Heart right ventricle (tissue), 16 donors: ENCODE measurements at regions of chr16 and their contacts with region 1.

Region 1: DNA sequence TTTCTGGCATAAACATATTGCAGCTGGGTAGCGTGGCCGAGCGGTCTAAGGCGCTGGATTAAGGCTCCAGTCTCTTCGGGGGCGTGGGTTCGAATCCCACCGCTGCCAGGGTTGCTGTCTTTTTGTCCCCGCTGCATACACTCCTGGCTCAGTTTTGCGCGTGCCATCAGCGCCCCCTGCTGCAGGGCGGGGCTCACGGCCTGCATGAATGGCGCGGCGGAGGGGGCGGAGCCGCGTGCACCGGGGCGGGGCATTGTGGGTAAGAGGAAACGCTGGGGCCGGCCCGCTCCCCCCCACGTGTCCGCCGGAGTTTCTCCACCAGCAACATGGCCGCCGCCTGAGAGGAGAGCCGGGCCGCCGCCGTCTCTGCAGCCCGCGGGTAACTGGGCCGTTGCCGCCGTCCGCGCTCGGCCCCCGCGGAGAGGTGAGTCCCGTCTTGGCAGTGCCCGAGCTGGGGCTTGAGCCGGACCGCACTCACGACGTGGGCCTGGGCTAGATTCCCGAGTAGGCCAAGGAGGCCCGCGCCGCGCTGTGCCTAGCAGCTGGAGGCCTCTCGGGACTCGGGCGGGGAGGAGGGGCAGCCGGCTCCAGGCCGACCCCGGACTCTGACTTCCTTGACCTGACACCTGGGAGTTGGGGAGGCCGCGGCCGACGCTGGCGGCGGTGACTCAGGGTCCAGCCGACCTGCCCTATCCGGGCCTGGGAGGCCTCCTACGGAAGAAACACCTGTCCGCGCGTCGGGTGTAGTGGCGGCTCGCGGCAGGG is at the start of gene POLR3E:
- DNase-seq: peak; percentile 99 to 100
- ATAC-seq: peak; percentile 95 to 97 (median 97)
- H3K4me3 ChIP-seq: peak within 1 kb of the TSS; percentile 58 to 99 (median 87)
- H3K27ac ChIP-seq: peak within 1 kb of the TSS; percentile 61 to 96 (median 92)
- H3K4me1 ChIP-seq: peaks cover 0 to 35% (median 23%) of the 10 kb centered on the region in 9 donors
- H3K27me3 ChIP-seq: no peaks in the 10 kb centered on the region
- CTCF ChIP-seq: peak; percentile 90 to 98 (median 96)
- total RNA-seq, gene POLR3E: 27.8 to 40.7 (median 31.7) TPM

Region 2: DNA sequence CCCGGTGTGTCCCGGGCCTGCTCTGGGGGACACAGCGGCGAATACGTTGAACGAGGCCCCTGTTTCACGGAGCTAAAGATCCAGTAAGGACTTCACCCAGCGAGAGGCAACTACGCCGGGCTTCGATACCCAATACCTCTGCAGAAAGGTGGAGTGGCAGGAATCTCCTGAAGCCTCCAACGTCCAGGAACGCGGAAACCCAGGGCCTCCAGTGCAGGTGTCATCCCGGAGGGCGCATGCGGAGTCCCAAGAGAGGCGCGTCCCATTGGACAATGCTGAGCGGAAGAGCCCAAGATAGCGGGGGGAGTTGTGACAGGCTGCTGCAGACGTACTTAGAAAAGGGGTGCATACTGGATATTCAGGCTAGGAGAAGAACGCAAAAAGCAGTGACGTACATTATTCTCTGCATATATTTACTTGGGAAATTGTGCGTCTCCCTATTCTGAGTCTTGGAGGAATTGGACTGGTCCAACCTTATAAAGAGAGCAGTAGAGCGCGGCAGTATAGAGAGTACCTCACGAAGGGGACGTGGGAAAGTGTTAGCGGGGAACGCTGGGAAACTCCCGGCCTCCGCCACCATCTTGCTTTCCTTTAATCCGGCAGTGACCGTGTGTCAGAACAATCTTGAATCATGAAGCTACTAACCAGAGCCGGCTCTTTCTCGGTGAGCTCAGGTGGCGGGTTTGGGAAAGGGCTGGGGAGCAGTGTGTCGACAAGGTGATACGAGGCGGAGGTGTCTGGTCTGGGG is 344.3 kb before region 1 on chr16 and contains the start of gene UQCRC2:
- intact Hi-C with region 1: loop called in 1 of 10 experiments (anchors 2 kb)
- DNase-seq: peak; percentile 85 to 93
- ATAC-seq: peak; percentile 95 to 98 (median 97)
- H3K4me3 ChIP-seq: peak within 1 kb of the TSS; percentile 78 to 98 (median 88)
- H3K27ac ChIP-seq: peak within 1 kb of the TSS; percentile 86 to 99 (median 96)
- H3K4me1 ChIP-seq: peaks cover 3 to 70% (median 50%) of the 10 kb centered on the region in 9 donors
- H3K27me3 ChIP-seq: no peaks in the 10 kb centered on the region
- CTCF ChIP-seq: no peak
- total RNA-seq, gene UQCRC2: 648 to 1,183 (median 997) TPM

Region 3: DNA sequence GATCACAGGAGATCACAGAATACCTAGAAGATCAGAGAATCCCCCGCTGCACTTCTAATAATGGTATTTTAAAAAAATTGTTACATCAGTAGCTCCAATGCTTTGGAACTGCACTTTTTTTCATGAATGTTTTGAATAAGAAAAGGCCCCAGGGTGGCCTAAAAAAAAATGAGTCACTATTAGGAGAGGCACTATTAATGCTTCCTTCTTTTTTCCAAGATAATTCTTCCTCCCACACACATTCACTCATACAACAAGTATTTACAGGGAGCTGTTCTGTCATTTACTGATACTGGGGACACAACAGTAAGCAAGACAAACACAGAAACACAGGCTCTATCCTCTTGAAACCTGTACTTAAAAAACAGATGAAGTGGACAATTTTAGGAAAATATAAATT is 295.7 kb before region 1 on chr16:
- intact Hi-C with region 1: loop called in 5 of 10 experiments (anchors 5 to 10 kb)
- DNase-seq: no peak
- ATAC-seq: peak in 1 of 8 donors; percentile 41
- H3K4me3 ChIP-seq: no peak overlapping the region
- H3K27ac ChIP-seq: no peak overlapping the region
- H3K4me1 ChIP-seq: peaks cover 3 to 37% (median 15%) of the 10 kb centered on the region in 9 donors
- H3K27me3 ChIP-seq: no peaks in the 10 kb centered on the region
- CTCF ChIP-seq: no peak

Region 4: GRCh38 chr16:22007509-22008214 is 289.6 kb before region 1 on chr16 and contains the start of gene MOSMO:
- intact Hi-C with region 1: loop called in 5 of 10 experiments (anchors 5 to 10 kb)
- DNase-seq: peak; percentile 74 to 83
- ATAC-seq: peak; percentile 85 to 97 (median 94)
- H3K4me3 ChIP-seq: peak within 1 kb of the TSS; percentile 58 to 100 (median 96)
- H3K27ac ChIP-seq: peak within 1 kb of the TSS; percentile 33 to 97 (median 90)
- H3K4me1 ChIP-seq: peaks cover 0 to 44% (median 32%) of the 10 kb centered on the region in 9 donors
- H3K27me3 ChIP-seq: no peaks in the 10 kb centered on the region
- CTCF ChIP-seq: peak in 3 of 9 donors; percentile 8 to 31 (median 27)
- total RNA-seq, gene MOSMO: 9.8 to 13.0 (median 11.3) TPM

Region 5: GRCh38 chr16:22063888-22064467 is 233.3 kb before region 1 on chr16:
- intact Hi-C with region 1: loop called in 1 of 10 experiments (anchors 5 kb)
- DNase-seq: no peak
- ATAC-seq: no peak
- H3K4me3 ChIP-seq: no peak overlapping the region
- H3K27ac ChIP-seq: no peak overlapping the region
- H3K4me1 ChIP-seq: no peaks in the 10 kb centered on the region
- H3K27me3 ChIP-seq: no peaks in the 10 kb centered on the region
- CTCF ChIP-seq: no peak

Region 6: DNA sequence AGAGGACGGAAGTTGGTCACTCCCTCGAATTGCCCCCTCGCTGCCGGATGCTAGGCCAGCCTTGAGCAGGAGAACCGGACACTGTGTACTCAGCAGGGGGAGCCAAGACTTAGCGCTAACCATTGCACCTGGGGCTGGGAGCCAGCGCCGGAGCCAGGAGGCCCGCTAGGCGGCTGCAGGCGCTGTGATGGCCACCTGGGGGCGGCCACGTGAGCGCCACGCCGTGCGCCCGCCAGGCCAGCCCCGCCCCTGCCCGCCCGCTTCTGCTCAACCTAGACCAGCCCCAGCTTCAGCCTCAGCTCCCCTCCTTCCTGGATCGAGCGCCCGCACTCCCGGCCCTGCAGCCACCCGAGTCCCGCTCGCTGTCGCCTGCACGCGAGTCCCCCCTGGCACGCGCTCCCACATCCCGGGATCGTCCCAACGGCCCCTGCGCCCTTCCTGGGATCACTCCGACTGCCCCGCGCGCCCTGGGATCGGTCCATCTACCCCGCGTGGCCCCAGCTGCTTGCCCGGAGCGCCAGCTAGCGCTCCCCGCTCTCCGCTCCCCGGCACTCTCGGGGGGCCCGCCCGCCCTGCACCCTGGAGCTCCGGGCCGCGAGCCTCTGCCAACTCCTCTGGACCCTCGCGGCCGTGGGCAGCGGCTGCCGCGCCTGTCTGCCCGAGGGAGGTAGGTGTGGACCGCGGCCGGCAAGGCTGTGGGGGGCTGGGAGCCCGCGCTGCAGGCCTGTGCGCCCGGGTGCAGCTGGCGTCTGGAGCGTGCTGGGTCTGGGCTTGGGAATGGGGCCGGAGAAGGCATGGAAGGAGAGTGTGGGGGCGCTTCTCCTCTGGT is 91.1 kb before region 1 on chr16 and contains the start of gene EEF2K:
- intact Hi-C with region 1: loop called in 6 of 10 experiments (anchors 1 to 5 kb)
- DNase-seq: peak; percentile 90 to 93
- ATAC-seq: peak; percentile 91 to 96 (median 94)
- H3K4me3 ChIP-seq: peak within 1 kb of the TSS; percentile 74 to 97 (median 88)
- H3K27ac ChIP-seq: peak within 1 kb of the TSS; percentile 84 to 97 (median 92)
- H3K4me1 ChIP-seq: peaks cover 0 to 52% (median 29%) of the 10 kb centered on the region in 9 donors
- H3K27me3 ChIP-seq: no peaks in the 10 kb centered on the region
- CTCF ChIP-seq: peak; percentile 74 to 96 (median 91)
- total RNA-seq, gene EEF2K: 17.2 to 38.9 (median 23.2) TPM